ENCODE measurements at regions of chr12 and their contacts with region 1.

Region 1: DNA sequence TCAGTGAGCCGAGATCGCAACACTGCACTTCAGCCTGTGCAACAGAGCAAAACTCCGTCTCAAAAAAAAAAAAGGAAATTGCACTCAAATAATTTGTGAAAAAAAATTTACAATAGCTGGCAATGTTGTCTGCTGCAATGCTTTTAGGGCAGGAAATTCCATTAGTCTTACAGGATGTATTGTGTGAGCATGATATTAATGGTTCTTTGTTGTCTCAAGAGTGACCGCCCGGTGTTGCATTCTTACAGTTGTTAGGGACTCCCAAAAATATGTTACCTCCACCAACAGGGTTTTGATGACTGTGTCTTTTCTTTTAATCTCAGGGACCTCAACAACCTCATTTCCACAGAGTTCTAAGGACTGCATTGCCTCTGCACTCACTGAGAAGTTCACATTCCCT is 44.8 kb downstream of the PZP start:
- DNase-seq: no peak
- H3K4me3 ChIP-seq: no peak overlapping the region
- H3K27ac ChIP-seq: no peak overlapping the region
- H3K4me1 ChIP-seq: no peaks in the 10 kb centered on the region
- H3K27me3 ChIP-seq: peaks cover 43% of the 10 kb centered on the region
- CTCF ChIP-seq: no peak

Region 2: DNA sequence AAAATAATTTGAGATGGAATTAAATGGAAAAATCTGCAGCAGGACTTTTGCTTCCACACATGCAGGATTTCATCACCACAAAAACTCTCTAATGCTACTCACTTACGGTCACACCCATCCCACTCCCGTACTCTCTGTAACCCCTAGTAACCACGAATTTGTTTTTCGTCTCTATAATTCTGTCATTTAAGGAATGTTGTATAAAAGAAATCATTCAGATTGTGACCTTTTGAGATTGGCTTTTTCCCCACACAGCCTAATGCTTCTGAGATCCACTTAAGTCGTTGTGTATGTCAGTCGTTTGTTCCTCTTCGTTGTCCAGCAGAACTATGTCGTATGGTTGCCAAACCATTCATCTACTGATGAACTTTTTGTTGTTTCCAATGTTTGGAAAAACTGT is 64.6 kb after region 1 on chr12:
- CTCF ChIA-PET with region 1: no interaction called
- POLR2A ChIA-PET with region 1: no interaction called
- intact Hi-C with region 1: no loop called
- DNase-seq: no peak
- H3K4me3 ChIP-seq: no peak overlapping the region
- H3K27ac ChIP-seq: no peak overlapping the region
- H3K4me1 ChIP-seq: no peaks in the 10 kb centered on the region
- H3K27me3 ChIP-seq: peaks cover 50% of the 10 kb centered on the region
- CTCF ChIP-seq: no peak

Region 3: GRCh38 chr12:9392842-9393241 is 229.4 kb after region 1 on chr12:
- CTCF ChIA-PET with region 1: interaction called, 10 read pairs
- POLR2A ChIA-PET with region 1: no interaction called
- intact Hi-C with region 1: no loop called
- DNase-seq: no peak
- H3K4me3 ChIP-seq: no peak overlapping the region
- H3K27ac ChIP-seq: no peak overlapping the region
- H3K4me1 ChIP-seq: no peaks in the 10 kb centered on the region
- H3K27me3 ChIP-seq: 0 out of 2 replicates have a peak, but pooled peaks cover 9% of the 10 kb centered on the region
- CTCF ChIP-seq: no peak

Region 4: DNA sequence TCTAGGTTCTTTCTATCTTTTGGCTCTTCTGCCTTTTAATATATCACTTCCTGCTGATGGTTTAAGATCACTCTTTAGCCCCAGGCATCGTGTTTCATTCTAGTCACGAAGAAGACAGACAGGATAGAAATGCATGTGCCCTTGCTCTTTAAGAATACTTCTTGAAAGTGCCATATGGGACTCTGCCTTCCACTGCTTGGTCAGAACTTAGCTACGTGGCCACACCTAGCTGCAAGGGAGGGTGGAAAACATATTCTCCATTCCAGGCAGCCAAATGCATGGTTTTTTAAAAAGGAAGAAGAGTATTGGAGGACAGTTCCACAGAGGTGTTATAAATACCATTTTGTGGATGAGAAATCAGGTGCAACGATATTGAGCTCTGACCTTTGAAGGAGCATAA is 301.0 kb after region 1 on chr12:
- CTCF ChIA-PET with region 1: no interaction called
- POLR2A ChIA-PET with region 1: no interaction called
- intact Hi-C with region 1: no loop called
- DNase-seq: no peak
- H3K4me3 ChIP-seq: no peak overlapping the region
- H3K27ac ChIP-seq: no peak overlapping the region
- H3K4me1 ChIP-seq: no peaks in the 10 kb centered on the region
- H3K27me3 ChIP-seq: no peaks in the 10 kb centered on the region
- CTCF ChIP-seq: no peak